MCF 10A (cell line): ENCODE measurements at regions of chr15 and their contacts with region 1.

Region 1: DNA sequence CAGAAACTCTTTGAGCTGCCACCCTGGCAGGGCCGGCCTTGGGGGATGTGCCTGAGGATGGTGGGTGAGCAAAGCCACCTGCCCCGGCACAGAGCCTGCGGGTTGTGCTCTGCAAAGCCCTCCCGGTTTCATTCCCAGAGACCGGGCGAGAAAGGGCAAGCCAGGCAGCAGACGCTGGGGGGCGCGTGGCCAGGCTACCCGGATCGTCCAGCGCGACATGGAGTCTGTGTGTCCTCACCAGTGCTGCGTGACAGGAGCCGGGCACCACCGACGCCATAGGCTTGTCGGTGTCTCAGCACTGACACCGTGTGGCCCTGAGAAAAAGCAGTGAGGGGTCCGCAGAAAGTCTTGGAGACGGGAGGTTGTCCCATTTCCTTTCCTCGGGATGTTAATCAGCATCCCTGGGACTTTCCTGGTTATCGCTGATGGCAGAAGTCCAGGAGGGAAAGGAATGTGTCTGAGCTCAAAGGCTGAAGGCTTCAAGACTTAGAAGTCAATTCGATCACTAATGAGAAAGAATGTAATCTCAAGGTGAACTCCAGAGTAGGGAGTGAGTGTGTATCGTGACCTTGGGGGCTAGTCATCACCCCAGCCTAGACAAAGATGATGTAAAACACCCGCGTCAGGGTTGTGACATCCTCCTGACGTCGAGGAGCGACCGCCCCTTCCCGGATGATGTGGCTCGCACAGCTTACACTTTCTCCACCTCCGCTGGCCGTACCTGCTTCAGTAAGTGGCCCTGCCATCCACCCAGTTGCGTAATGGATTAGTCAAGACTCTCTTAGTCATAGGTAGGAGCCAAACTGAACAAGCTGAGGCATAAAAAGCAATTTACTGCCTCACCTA is 36.3 kb upstream of the PLA2G4E start:
- DNase-seq: peak; percentile 99
- H3K4me3 Mint-ChIP-seq: peak overlapping the region; percentile 69
- H3K27ac Mint-ChIP-seq: peak overlapping the region; percentile 95
- H3K4me1 Mint-ChIP-seq: peaks cover 13% of the 10 kb centered on the region
- H3K27me3 Mint-ChIP-seq: no peaks in the 10 kb centered on the region
- CTCF ChIP-seq: peak; percentile 59

Region 2: GRCh38 chr15:41930221-41930866 is 126.8 kb before region 1 on chr15:
- CTCF ChIA-PET with region 1: interaction called, 4 read pairs
- POLR2A ChIA-PET with region 1: no interaction called
- intact Hi-C with region 1: loop called (anchors 1 kb)
- DNase-seq: peak; percentile 91
- H3K4me3 Mint-ChIP-seq: no peak overlapping the region
- H3K27ac Mint-ChIP-seq: peak overlapping the region; percentile 52
- H3K4me1 Mint-ChIP-seq: peaks cover 45% of the 10 kb centered on the region
- H3K27me3 Mint-ChIP-seq: no peaks in the 10 kb centered on the region
- CTCF ChIP-seq: no peak

Region 3: GRCh38 chr15:41972253-41973242 is 84.6 kb before region 1 on chr15 and contains the start of gene EHD4:
- CTCF ChIA-PET with region 1: interaction called, 6 read pairs
- POLR2A ChIA-PET with region 1: interaction called, 18 read pairs
- intact Hi-C with region 1: loop called (anchors 5 kb)
- DNase-seq: peak; percentile 100
- H3K4me3 Mint-ChIP-seq: peak within 1 kb of the TSS; percentile 82
- H3K27ac Mint-ChIP-seq: peak within 1 kb of the TSS; percentile 83
- H3K4me1 Mint-ChIP-seq: peaks cover 40% of the 10 kb centered on the region
- H3K27me3 Mint-ChIP-seq: no peaks in the 10 kb centered on the region
- CTCF ChIP-seq: no peak
- total RNA-seq, gene EHD4: 24.2 and 27.1 TPM in 2 replicates

Region 4: DNA sequence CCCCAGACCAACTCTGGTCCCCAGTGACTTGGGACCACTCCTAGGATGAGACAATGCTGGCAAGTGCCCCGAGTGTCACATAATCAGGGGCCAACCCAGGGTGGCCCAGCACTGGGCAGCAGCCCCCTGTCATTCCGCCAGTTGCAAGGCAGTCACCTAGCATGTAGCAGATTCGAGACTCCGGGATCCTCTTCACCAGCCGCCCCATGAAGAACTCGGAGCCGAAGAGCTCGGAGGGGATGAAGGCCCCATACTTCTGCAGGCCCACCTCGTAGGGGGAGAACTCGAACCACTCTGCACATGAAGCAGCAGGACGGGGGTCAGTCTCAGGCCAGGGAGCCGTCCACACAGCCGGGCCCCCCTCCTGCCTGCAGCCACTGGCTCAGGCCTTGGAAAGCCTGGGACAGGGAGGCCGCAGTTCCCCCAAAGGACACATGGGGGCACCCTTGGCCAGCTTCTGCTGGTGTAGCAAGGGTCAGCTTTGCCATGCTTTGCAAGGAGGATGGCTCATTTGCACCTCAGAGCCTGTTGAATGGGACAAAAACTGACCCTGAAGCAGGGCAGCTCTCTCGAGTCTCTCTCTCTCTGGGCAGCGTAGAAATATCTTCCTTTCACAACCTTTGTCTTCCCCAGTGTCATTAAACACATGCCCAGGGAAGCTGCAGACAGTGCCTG is 67.8 kb before region 1 on chr15:
- CTCF ChIA-PET with region 1: interaction called, 159 read pairs
- POLR2A ChIA-PET with region 1: interaction called, 28 read pairs
- intact Hi-C with region 1: loop called (anchors 1 kb)
- DNase-seq: peak; percentile 83
- H3K4me3 Mint-ChIP-seq: no peak overlapping the region
- H3K27ac Mint-ChIP-seq: no peak overlapping the region
- H3K4me1 Mint-ChIP-seq: no peaks in the 10 kb centered on the region
- H3K27me3 Mint-ChIP-seq: no peaks in the 10 kb centered on the region
- CTCF ChIP-seq: peak; percentile 98

Region 5: DNA sequence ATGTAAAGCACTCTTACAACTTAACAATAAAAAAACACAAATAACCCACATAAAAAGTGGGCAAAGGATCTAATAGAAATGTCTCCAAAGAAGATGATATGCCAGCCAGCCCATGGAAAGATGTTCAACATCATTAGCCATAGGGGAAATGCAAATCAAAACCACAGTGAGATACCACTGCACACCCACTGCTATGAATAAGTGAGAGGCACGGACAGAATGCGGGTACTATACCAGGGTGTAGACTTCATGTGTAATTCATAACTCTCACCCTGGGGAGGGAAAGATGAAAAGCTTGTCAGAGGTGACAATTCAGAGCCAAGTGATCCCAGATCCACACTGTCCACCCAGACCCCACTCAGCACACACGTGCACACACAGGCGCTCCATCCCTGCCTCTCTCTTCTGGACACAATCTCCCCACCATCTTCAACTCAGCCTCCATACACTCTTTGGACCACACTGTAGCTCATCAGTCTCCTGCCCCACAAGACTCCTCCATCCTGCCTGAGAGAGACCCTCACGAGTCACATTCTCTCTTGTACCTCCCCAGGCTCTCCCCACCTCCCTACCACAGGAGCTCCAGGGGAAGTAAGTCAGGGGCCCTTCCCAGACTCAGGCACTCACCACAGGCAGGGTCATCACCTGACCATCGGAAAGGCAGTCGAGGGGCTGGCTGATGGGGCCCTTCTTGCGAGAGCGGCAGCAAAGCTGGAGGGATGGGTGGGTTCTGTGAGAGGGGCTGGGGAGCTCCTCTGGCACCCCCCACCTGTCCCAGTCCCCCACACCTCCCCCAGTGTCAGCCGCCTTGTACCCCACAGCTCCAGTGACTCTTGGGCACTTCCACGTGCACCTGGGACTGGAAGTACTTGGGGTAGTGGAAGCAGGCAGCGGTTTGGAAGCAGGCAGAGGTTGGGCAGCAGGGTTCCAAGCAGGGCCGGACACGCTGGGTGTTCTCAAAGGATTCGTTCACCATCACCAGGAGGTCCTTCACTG is 57.6 kb before region 1 on chr15:
- CTCF ChIA-PET with region 1: interaction called, 13 read pairs
- POLR2A ChIA-PET with region 1: interaction called, 5 read pairs
- intact Hi-C with region 1: no loop called
- DNase-seq: no peak
- H3K4me3 Mint-ChIP-seq: no peak overlapping the region
- H3K27ac Mint-ChIP-seq: no peak overlapping the region
- H3K4me1 Mint-ChIP-seq: no peaks in the 10 kb centered on the region
- H3K27me3 Mint-ChIP-seq: peaks cover 11% of the 10 kb centered on the region
- CTCF ChIP-seq: no peak

Region 6: GRCh38 chr15:42037656-42038055 is 19.5 kb before region 1 on chr15:
- CTCF ChIA-PET with region 1: interaction called, 4 read pairs
- POLR2A ChIA-PET with region 1: interaction called, 11 read pairs
- intact Hi-C with region 1: no loop called
- DNase-seq: peak; percentile 89
- H3K4me3 Mint-ChIP-seq: no peak overlapping the region
- H3K27ac Mint-ChIP-seq: no peak overlapping the region
- H3K4me1 Mint-ChIP-seq: peaks cover 5% of the 10 kb centered on the region
- H3K27me3 Mint-ChIP-seq: no peaks in the 10 kb centered on the region
- CTCF ChIP-seq: no peak

Region 7: DNA sequence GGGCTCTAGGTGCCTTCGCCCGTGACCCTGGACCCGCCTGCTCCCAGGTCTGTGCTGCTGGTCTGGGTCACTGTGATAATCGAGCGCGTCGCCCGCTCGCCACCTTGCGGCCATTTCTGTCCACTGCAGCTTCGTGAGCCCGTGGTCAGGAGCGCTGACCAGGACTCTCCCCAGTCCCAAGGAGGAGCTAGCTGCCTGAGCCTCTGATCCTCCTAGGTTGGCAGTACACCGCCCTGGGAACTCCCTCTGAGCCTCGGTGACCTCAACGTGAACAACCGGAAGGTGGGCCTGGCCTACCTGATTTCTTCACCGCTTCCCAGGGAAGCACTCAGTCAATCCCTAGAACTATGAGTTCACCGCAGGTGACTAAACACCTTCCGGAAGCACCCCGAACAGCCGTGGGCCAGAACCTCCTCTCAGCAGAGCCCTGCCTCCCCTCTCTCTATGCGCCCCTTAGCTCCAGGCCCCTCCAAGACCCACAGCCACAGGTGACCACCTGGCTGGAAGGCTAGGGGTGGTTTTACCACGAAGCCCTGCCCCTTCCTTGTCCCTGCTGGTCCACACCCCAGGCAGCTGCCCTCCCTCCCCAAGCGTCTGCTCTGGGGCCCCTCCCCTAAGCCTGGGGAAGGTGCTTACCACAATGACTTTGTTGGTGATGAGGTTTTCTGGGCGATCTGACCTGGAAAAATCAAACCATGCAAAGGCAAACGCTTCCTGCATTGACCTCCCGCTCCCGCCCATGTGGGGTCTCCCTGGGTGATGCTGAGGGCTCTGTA is 27.5 kb after region 1 on chr15:
- CTCF ChIA-PET with region 1: interaction called, 180 read pairs
- POLR2A ChIA-PET with region 1: interaction called, 4 read pairs
- intact Hi-C with region 1: no loop called
- DNase-seq: peak; percentile 96
- H3K4me3 Mint-ChIP-seq: peak overlapping the region; percentile 65
- H3K27ac Mint-ChIP-seq: peak overlapping the region; percentile 77
- H3K4me1 Mint-ChIP-seq: peaks cover 26% of the 10 kb centered on the region
- H3K27me3 Mint-ChIP-seq: no peaks in the 10 kb centered on the region
- CTCF ChIP-seq: peak; percentile 86